Ovary (tissue), 10 donors: ENCODE measurements at regions of chr15 and their contacts with region 1.

Region 1: GRCh38 chr15:80404057-80404715 is at the start of gene ARNT2:
- DNase-seq: peak; percentile 27 to 64 (median 54)
- H3K4me3 ChIP-seq: peak within 1 kb of the TSS; percentile 43
- H3K27ac ChIP-seq: peak within 1 kb of the TSS; percentile 39 to 53
- H3K4me1 ChIP-seq: peaks cover 7% of the 10 kb centered on the region
- H3K27me3 ChIP-seq: no peaks in the 10 kb centered on the region
- CTCF ChIP-seq: no peak
- EP300 ChIP-seq: no peak
- POLR2A ChIP-seq: no peak
- total RNA-seq, gene ARNT2: 12.0 to 20.5 (median 18.4) TPM

Region 2: DNA sequence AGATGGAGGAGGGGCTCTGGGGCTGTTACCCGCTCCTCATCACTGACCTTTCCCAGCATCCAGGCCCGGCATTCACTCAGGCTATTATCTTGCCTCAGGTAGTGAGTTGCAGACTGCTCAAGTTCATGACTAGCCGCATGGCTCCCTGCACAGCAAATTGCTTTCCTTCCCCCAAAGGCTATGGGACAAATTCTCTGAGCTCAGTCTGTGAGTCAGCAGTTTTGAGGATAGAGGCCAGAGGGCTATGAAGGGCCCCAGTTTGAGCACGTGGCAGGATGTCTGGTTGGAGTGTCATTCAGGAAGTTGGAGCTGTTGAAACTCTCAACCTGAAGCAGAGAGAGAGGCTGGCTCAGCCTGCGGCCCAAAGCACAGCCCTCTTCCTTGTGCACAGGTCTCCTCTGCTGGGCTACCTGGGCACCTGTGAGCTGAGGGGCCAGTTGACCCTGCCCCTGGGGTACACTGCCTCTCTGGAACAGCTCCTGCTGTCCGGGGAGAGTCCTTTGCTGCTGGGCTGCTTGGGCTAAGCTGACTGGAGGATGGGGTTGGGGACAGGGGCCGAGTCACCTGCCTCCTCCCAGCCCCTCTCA is 243.5 kb before region 1 on chr15:
- intact Hi-C with region 1: loop called in 1 of 4 experiments (anchors 10 kb)
- DNase-seq: peak in 2 of 5 donors; percentile 35 to 43
- H3K4me3 ChIP-seq: no peak overlapping the region
- H3K27ac ChIP-seq: no peak overlapping the region
- H3K4me1 ChIP-seq: no peaks in the 10 kb centered on the region
- H3K27me3 ChIP-seq: no peaks in the 10 kb centered on the region
- CTCF ChIP-seq: no peak
- EP300 ChIP-seq: no peak
- POLR2A ChIP-seq: no peak

Region 3: GRCh38 chr15:80367094-80367493 is 37.1 kb before region 1 on chr15:
- intact Hi-C with region 1: no loop called
- DNase-seq: no peak
- H3K4me3 ChIP-seq: no peak overlapping the region
- H3K27ac ChIP-seq: no peak overlapping the region
- H3K4me1 ChIP-seq: no peaks in the 10 kb centered on the region
- H3K27me3 ChIP-seq: no peaks in the 10 kb centered on the region
- CTCF ChIP-seq: no peak
- EP300 ChIP-seq: no peak
- POLR2A ChIP-seq: no peak